Dorsolateral prefrontal cortex (tissue), 120 donors: ENCODE measurements at regions of chr1 and their contacts with region 1.

Region 1: GRCh38 chr1:164803366-164803765 is 244.4 kb downstream of the PBX1 start:
- DNase-seq: no peak
- H3K4me3 ChIP-seq: no peak overlapping the region
- H3K27ac ChIP-seq: peak overlapping the region in 15 of 59 donors; percentile 3 to 87 (median 31)
- H3K27me3 ChIP-seq: no peaks in the 10 kb centered on the region
- CTCF ChIP-seq: no peak

Region 2: GRCh38 chr1:164743976-164744375 is 59.4 kb before region 1 on chr1:
- intact Hi-C with region 1: no loop called
- DNase-seq: no peak
- H3K4me3 ChIP-seq: no peak overlapping the region
- H3K27ac ChIP-seq: no peak overlapping the region
- H3K27me3 ChIP-seq: no peaks in the 10 kb centered on the region
- CTCF ChIP-seq: no peak

Region 3: GRCh38 chr1:164914208-164914607 is 110.8 kb after region 1 on chr1:
- intact Hi-C with region 1: loop called in 1 of 2 experiments (anchors 10 kb)
- DNase-seq: no peak
- H3K4me3 ChIP-seq: no peak overlapping the region
- H3K27ac ChIP-seq: peak overlapping the region in 11 of 59 donors; percentile 4 to 60 (median 34)
- H3K27me3 ChIP-seq: no peaks in the 10 kb centered on the region
- CTCF ChIP-seq: peak in 46 of 56 donors; percentile 9 to 61 (median 42)